ENCODE measurements at regions of chr20 and their contacts with region 1.

Region 1: DNA sequence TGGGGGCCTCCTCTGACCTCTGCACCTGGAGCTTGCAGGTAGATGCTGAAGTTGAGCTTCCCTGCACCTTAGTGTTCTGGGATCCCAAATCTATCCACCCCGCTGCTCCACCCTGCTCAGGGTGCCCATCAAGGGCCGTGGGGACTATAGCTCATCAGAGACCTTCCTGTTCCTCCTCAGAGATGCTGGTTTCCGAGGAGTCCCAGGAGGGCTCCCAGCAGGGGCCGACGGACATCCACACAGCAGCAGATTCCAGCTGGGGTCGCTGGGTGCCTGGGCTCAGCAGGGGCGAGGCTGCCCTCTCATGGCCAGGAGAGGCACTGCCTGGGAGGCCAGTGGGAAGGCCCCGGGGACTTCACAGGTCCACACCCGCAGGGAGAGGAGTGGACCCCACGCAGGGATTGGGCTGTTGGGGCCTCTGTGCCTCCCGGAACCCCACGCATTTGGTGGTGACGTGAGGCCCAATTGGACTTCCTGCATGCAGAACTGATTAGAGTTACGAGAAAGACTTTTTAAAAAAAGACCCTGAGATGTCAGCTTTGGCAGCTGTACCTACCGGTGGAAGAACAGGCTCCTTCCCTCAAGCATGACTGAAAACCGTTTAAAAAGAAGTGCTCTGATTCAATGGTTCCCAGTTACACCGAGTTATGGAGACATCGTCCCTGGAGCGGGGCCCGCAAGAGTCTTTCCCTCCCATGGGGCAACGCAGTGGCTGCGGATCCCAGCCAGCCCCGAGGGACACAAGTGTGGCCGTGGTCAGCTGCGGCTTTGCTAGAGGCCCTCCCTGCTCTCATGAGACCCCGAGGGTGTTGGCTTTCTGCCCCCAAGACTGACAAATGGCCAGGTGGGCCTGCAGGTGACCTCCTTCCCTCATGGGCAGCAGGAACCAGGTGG is 25.3 kb upstream of the SLCO4A1 start:
- DNase-seq: peak; percentile 81
- ATAC-seq: peak; percentile 71
- H3K4me3 ChIP-seq: no peak overlapping the region
- H3K4me3 Mint-ChIP-seq: peak overlapping the region; percentile 83
- H3K27ac ChIP-seq: peak overlapping the region; percentile 54 to 73
- H3K27ac Mint-ChIP-seq: peak overlapping the region; percentile 94
- H3K4me1 ChIP-seq: peaks cover 31 to 33% of the 10 kb centered on the region in 2 donors
- H3K4me1 Mint-ChIP-seq: peaks cover 41% of the 10 kb centered on the region
- H3K27me3 ChIP-seq: no peaks in the 10 kb centered on the region
- H3K27me3 Mint-ChIP-seq: no peaks in the 10 kb centered on the region
- CTCF ChIP-seq: peak; percentile 92

Region 2: GRCh38 chr20:62407221-62407992 is 209.6 kb before region 1 on chr20 and contains the start of gene CABLES2:
- CTCF ChIA-PET with region 1: interaction called, 11 read pairs
- POLR2A ChIA-PET with region 1: no interaction called
- intact Hi-C with region 1: no loop called
- DNase-seq: peak; percentile 95
- ATAC-seq: peak; percentile 90
- H3K4me3 ChIP-seq: peak within 1 kb of the TSS; percentile 36 to 71 (median 67)
- H3K4me3 Mint-ChIP-seq: peak within 1 kb of the TSS; percentile 90
- H3K27ac ChIP-seq: peak within 1 kb of the TSS; percentile 59 to 66
- H3K27ac Mint-ChIP-seq: peak within 1 kb of the TSS; percentile 87
- H3K4me1 ChIP-seq: peaks cover 30 to 41% of the 10 kb centered on the region in 2 donors
- H3K4me1 Mint-ChIP-seq: peaks cover 30% of the 10 kb centered on the region
- H3K27me3 ChIP-seq: no peaks in the 10 kb centered on the region
- H3K27me3 Mint-ChIP-seq: no peaks in the 10 kb centered on the region
- CTCF ChIP-seq: no peak
- total RNA-seq, gene CABLES2: 8.2 and 8.6 TPM in 2 replicates

Region 3: GRCh38 chr20:62500237-62500864 is 116.6 kb before region 1 on chr20:
- CTCF ChIA-PET with region 1: interaction called, 65 read pairs
- POLR2A ChIA-PET with region 1: interaction called, 3 read pairs
- intact Hi-C with region 1: loop called (anchors 1 kb)
- DNase-seq: peak; percentile 87
- ATAC-seq: peak; percentile 65
- H3K4me3 ChIP-seq: no peak overlapping the region
- H3K4me3 Mint-ChIP-seq: peak overlapping the region; percentile 15
- H3K27ac ChIP-seq: no peak overlapping the region
- H3K27ac Mint-ChIP-seq: peak overlapping the region; percentile 67
- H3K4me1 ChIP-seq: peaks cover 28 to 44% of the 10 kb centered on the region in 2 donors
- H3K4me1 Mint-ChIP-seq: peaks cover 36% of the 10 kb centered on the region
- H3K27me3 ChIP-seq: peaks cover 0 to 5% (median 0%) of the 10 kb centered on the region in 4 experiments
- H3K27me3 Mint-ChIP-seq: peaks cover 3% of the 10 kb centered on the region
- CTCF ChIP-seq: peak; percentile 80

Region 4: DNA sequence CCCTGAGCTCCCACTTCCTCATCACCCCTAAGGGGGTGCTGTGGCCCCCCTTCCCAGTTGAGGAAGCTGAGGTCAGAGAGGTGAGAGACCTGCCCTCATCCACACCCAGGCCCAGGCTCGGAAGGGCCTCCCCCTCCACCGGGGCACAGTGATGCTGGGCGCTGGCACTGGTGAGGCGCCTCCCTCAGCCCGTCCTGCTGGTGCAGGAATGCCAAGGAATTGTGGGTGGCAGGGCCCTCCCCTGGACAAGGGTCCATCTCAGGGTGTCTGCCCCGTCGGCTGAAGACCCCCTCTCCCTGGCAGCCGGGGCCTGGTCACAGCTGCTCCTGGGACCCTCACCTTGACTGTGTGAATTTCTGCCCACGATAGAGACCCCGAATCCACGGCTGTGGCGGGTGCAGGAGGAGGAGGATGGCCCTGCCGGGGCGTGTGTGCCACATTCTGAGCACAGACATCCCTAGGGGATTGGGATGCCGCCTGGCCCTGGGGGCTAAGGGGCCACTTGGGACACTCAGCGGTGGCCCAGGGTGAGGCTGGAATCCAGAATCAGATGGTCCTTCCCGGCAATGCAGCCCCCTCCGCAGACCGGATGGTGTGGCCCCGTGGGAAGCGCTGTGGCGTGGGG is 71.0 kb before region 1 on chr20:
- CTCF ChIA-PET with region 1: no interaction called
- POLR2A ChIA-PET with region 1: no interaction called
- intact Hi-C with region 1: no loop called
- DNase-seq: no peak
- ATAC-seq: no peak
- H3K4me3 ChIP-seq: no peak overlapping the region
- H3K4me3 Mint-ChIP-seq: no peak overlapping the region
- H3K27ac ChIP-seq: no peak overlapping the region
- H3K27ac Mint-ChIP-seq: no peak overlapping the region
- H3K4me1 ChIP-seq: peaks cover 5 to 9% of the 10 kb centered on the region in 2 donors
- H3K4me1 Mint-ChIP-seq: peaks cover 4% of the 10 kb centered on the region
- H3K27me3 ChIP-seq: peaks cover 0 to 33% (median 7%) of the 10 kb centered on the region in 4 experiments
- H3K27me3 Mint-ChIP-seq: peaks cover 14% of the 10 kb centered on the region
- CTCF ChIP-seq: no peak

Region 5: DNA sequence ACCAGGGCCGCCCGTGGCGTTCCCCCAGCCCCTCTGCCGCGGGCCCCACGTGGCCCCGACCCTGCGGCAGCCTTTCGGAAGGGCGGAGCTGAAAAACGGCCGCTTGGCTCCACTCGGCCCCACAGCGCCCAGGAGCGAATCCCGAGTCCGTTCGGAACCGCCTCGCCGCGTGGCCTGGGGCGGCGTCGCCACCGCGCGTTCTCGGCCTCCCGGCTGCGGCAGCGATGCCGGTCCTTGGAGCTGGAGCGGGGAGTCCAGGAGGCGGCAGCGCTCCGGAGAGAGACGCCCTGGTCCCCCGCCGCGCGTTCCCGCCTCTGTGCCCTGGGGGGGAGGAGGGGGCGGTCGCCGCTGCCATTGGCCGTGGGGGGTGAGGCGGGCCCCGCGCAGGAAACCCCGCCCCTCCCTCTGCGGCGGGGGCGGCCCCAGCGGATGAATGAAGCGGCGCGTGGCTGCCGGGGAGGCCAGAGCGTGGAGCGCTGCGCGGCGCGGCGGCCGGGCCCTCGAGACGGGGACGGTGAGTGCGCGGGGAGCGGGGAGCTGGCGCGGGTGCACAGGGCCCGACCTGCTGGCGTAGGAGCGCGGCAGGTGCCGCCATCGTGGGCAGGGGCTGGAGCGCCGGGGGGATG is 25.2 kb after region 1 on chr20 and contains the start of gene SLCO4A1:
- CTCF ChIA-PET with region 1: interaction called, 27 read pairs
- POLR2A ChIA-PET with region 1: interaction called, 16 read pairs
- intact Hi-C with region 1: no loop called
- DNase-seq: peak; percentile 90
- ATAC-seq: peak; percentile 89
- H3K4me3 ChIP-seq: peak within 1 kb of the TSS; percentile 9 to 77 (median 65)
- H3K4me3 Mint-ChIP-seq: peak within 1 kb of the TSS; percentile 89
- H3K27ac ChIP-seq: no peak within 1 kb of the TSS
- H3K27ac Mint-ChIP-seq: peak within 1 kb of the TSS; percentile 88
- H3K4me1 ChIP-seq: peaks cover 43 to 53% of the 10 kb centered on the region in 2 donors
- H3K4me1 Mint-ChIP-seq: peaks cover 43% of the 10 kb centered on the region
- H3K27me3 ChIP-seq: peaks cover 0 to 3% (median 0%) of the 10 kb centered on the region in 4 experiments
- H3K27me3 Mint-ChIP-seq: no peaks in the 10 kb centered on the region
- CTCF ChIP-seq: no peak
- total RNA-seq, gene SLCO4A1: 79.2 and 79.5 TPM in 2 replicates

Region 6: DNA sequence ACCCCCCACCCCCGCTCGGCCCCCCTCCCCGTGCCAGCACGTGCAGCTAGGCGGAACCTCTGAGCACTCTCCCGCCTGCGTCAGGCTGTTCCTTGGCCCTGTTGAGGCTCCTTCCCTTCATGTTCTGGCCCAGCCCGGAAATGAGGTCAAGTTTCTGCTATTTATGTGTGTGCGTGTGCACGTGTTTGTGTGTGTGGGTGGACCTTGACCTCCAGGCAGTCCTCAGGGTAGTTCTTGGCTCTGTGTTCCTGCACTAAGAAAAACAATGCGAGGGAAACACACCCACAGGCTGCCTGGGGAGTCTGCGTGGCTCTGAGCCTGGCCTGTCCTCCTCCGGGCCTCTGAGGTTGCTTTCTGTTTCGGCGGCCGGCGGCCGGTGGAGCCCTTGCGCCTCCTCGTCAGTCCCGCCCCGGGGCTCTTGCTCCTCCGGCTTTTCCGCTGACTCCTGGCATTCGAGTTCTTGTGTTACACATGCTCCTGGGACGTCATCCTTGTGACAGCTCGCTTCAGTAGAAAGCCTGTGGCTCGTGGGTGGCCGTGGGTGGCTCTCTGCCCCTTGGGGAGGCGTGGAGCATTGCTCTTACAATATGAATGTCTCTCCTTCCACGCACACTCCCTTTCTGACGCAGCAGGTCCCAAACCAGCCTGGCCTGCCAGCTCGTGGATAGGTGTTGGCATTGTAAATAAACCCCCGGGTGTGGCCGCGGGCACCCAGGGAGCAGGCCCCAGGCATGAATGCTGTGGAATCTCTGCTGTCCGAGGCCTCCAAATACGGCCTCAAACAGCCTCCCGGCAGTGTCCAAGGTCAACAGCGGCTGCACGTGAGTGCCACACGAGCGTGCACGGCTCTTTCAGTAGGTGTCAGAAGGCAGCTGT is 35.3 kb after region 1 on chr20:
- CTCF ChIA-PET with region 1: interaction called, 32 read pairs
- POLR2A ChIA-PET with region 1: interaction called, 17 read pairs
- intact Hi-C with region 1: loop called (anchors 1 kb)
- DNase-seq: peak; percentile 86
- ATAC-seq: peak; percentile 65
- H3K4me3 ChIP-seq: peak overlapping the region in 4 of 5 experiments; percentile 18 to 57 (median 44)
- H3K4me3 Mint-ChIP-seq: peak overlapping the region; percentile 87
- H3K27ac ChIP-seq: peak overlapping the region; percentile 85 to 91
- H3K27ac Mint-ChIP-seq: peak overlapping the region; percentile 96
- H3K4me1 ChIP-seq: peaks cover 51 to 57% of the 10 kb centered on the region in 2 donors
- H3K4me1 Mint-ChIP-seq: peaks cover 59% of the 10 kb centered on the region
- H3K27me3 ChIP-seq: no peaks in the 10 kb centered on the region
- H3K27me3 Mint-ChIP-seq: no peaks in the 10 kb centered on the region
- CTCF ChIP-seq: no peak

Region 7: GRCh38 chr20:62704301-62704948 is 87.5 kb after region 1 on chr20:
- CTCF ChIA-PET with region 1: no interaction called
- POLR2A ChIA-PET with region 1: no interaction called
- intact Hi-C with region 1: no loop called
- DNase-seq: no peak
- ATAC-seq: no peak
- H3K4me3 ChIP-seq: no peak overlapping the region
- H3K4me3 Mint-ChIP-seq: no peak overlapping the region
- H3K27ac ChIP-seq: no peak overlapping the region
- H3K27ac Mint-ChIP-seq: no peak overlapping the region
- H3K4me1 ChIP-seq: peaks cover 0 to 4% of the 10 kb centered on the region in 2 donors
- H3K4me1 Mint-ChIP-seq: peaks cover 4% of the 10 kb centered on the region
- H3K27me3 ChIP-seq: peaks cover 0 to 19% (median 4%) of the 10 kb centered on the region in 4 experiments
- H3K27me3 Mint-ChIP-seq: peaks cover 20% of the 10 kb centered on the region
- CTCF ChIP-seq: no peak

Measured in B cell (primary cell).